ENCODE measurements at regions of chr6 and their contacts with region 1.

Region 1: DNA sequence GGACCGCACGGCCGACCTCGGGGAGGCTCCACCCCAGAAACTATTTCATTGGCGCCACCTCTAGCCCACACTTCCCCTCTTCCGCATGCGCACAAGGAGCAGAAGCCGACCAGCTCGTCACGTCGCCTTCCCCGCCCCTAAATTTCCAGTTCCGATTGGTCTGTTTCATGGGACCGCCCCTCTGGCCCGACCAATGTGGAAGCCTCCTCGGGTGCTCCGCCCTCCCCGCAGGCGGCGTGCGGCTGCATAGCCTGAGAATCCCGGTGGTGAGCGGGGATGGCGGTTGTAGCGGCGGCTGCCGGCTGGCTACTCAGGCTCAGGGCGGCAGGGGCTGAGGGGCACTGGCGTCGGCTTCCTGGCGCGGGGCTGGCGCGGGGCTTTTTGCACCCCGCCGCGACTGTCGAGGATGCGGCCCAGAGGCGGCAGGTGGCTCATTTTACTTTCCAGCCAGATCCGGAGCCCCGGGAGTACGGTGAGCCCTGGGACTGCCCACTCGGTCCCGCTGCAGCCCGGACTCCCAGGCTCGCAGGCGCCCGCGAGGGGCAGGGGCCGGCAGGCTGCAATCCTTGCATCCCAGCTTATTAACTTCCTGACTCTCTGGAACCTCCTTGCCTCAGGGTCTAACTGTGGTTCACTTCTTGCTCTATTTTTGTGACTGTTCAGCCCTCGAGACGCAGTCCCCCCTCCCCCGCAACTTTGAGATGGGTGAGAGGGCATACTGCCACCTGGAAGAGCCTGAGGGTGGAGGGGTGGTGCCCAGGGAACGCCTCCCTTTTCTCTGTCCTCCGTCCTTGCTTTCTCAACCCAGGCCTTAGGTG is at the start of gene BCKDHB:
- DNase-seq: peak; percentile 89 to 99 (median 97)
- H3K4me3 ChIP-seq: peak within 1 kb of the TSS; percentile 72 to 99 (median 92)
- H3K27ac ChIP-seq: peak within 1 kb of the TSS in 57 of 59 donors; percentile 32 to 91 (median 80)
- H3K27me3 ChIP-seq: no peaks in the 10 kb centered on the region
- CTCF ChIP-seq: peak in 50 of 56 donors; percentile 21 to 72 (median 44)
- total RNA-seq, gene BCKDHB: 19.6 to 52.2 (median 33.4) TPM

Region 2: DNA sequence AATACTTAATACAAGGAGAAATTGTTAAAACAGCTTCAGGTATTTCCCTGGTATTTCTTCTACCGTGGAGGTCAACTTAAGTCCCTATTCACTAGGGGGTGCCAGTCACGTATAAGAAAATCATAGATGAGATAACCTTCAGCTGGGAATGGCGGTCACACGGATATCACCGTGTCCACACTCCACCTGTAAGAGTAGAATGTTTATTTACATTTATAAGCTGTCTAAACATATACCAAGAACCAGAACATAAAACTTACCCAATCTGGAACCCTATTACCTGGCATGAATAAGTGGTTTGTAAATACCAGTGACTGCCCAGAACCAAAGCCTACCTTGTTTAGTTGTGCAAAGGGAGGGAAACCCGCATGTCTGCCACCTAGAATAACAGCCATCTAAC is 157.4 kb before region 1 on chr6:
- intact Hi-C with region 1: loop called (anchors 5 kb)
- DNase-seq: peak in 3 of 10 donors; percentile 24 to 47 (median 32)
- H3K4me3 ChIP-seq: no peak overlapping the region
- H3K27ac ChIP-seq: no peak overlapping the region
- H3K27me3 ChIP-seq: no peaks in the 10 kb centered on the region
- CTCF ChIP-seq: peak in 55 of 56 donors; percentile 16 to 72 (median 53)